ENCODE measurements at regions of chr14 and their contacts with region 1.

Region 1: DNA sequence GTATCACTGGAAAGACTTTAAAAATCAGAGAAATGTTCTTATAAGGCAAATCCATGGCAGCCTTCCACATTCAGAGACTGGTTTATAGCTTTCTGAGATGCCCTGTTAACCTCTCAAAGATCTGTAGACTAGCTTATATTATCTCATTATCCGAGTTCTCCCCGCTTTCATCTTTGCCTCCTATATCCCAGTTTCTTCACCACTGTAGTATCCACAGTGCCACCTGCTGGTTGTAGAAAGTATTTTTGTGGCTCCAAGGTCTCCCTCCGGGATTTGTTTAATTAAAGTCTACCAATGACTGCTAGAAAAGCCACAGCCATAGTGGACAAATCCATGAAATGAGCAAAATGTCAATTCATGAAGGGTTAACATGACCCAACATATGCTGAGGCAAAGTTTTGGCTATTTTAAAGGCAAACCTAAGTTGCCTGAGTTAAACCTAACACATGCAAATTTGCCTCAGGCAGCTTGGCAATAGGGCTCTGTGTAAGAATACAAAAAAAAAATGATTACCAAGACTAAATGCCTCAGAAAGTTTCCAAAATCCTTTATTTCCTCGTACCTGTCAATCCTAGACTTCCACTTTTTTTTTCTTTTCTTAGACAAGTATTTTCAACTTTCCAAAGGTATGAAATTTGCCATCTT is 218.8 kb upstream of the BMP4 start:
- DNase-seq: peak; percentile 84
- H3K4me3 Mint-ChIP-seq: no peak overlapping the region
- H3K27ac Mint-ChIP-seq: no peak overlapping the region
- H3K4me1 Mint-ChIP-seq: peaks cover 30% of the 10 kb centered on the region
- H3K27me3 Mint-ChIP-seq: no peaks in the 10 kb centered on the region
- CTCF ChIP-seq: peak; percentile 80

Region 2: GRCh38 chr14:53432378-53432802 is 743.0 kb before region 1 on chr14:
- CTCF ChIA-PET with region 1: interaction called, 20 read pairs
- POLR2A ChIA-PET with region 1: no interaction called
- intact Hi-C with region 1: loop called (anchors 1 kb)
- DNase-seq: peak; percentile 56
- H3K4me3 Mint-ChIP-seq: no peak overlapping the region
- H3K27ac Mint-ChIP-seq: no peak overlapping the region
- H3K4me1 Mint-ChIP-seq: no peaks in the 10 kb centered on the region
- H3K27me3 Mint-ChIP-seq: no peaks in the 10 kb centered on the region
- CTCF ChIP-seq: peak; percentile 68

Region 3: GRCh38 chr14:53619691-53620231 is 555.7 kb before region 1 on chr14:
- CTCF ChIA-PET with region 1: no interaction called
- POLR2A ChIA-PET with region 1: no interaction called
- intact Hi-C with region 1: no loop called
- DNase-seq: no peak
- H3K4me3 Mint-ChIP-seq: no peak overlapping the region
- H3K27ac Mint-ChIP-seq: no peak overlapping the region
- H3K4me1 Mint-ChIP-seq: peaks cover 6% of the 10 kb centered on the region
- H3K27me3 Mint-ChIP-seq: no peaks in the 10 kb centered on the region
- CTCF ChIP-seq: no peak

Region 4: DNA sequence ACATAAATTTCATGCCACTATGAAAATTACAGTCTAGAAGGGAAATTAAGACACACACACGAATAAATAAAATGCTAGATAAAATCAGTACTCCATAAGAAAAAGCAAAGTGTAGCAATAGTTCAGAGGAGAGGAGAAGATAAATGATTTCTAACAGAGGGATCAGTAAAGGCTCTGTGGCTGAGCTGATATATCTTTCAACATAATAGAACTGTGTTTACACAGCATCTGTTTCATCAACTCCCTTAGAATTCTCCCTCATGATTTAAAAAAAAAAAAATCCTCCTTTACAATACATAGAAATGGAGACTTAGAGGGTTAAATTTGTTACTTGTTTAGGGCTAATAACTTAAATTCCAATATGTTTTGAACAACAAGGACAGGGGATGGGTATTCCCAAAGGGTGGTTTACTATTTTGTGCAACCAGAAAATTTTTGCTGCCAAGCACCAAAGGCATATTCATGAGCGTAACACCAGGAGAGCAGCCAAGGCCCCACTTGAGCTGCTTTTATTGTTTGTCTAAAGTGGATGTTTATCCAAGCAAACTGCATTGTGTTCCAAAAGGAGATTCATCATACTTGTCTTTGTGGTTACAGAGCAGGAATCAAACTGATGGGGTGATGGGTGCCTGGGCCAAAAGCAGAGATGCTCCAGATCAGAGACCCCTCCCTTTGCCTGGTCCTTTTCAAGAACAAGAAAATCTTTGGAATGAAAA is 381.5 kb before region 1 on chr14:
- CTCF ChIA-PET with region 1: no interaction called
- POLR2A ChIA-PET with region 1: no interaction called
- intact Hi-C with region 1: loop called (anchors 10 kb)
- DNase-seq: peak; percentile 50
- H3K4me3 Mint-ChIP-seq: no peak overlapping the region
- H3K27ac Mint-ChIP-seq: no peak overlapping the region
- H3K4me1 Mint-ChIP-seq: no peaks in the 10 kb centered on the region
- H3K27me3 Mint-ChIP-seq: no peaks in the 10 kb centered on the region
- CTCF ChIP-seq: no peak

Region 5: DNA sequence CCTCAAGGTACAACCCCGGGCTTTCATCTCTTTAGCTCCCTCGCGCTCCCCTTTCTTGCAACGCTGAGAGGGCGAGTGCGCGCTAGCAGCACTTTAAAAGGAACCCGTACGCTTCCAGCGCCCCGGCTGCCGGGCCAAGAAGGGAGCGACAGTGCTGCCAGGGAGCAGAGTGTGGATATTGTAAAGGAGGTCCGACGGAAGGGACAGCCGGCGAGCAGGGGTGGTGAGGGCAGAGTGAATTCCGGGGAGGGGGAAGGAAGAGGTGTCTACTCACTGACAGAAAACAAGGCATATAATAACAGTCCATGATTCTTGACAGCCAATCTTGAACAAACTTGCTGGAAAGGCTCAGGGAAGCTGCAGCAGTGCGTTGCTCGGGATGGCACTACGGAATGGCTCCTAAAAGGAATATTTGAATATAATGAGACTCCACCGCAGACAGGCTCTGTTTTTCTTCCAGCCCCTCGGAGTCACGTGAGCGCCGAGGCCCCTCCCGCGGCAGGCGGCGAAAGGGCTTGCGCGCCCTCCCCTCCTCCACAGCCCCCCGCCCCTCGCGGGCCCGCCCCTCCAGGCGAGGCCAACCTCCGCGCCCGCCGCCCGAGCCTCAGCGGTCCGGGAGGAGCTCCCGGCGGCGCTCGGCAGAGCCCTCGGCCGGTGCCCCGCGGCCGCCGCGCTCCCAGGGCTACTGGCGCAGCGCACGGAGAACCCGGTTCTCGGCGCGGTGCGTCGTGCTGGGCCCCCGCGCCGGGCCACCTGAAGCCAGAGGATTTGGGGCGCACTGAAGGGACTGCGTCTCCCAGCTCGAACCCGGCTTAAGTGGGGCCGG is 222.2 kb before region 1 on chr14:
- CTCF ChIA-PET with region 1: interaction called, 4 read pairs
- POLR2A ChIA-PET with region 1: interaction called, 11 read pairs
- intact Hi-C with region 1: loop called (anchors 10 kb)
- DNase-seq: peak; percentile 75
- H3K4me3 Mint-ChIP-seq: peak overlapping the region; percentile 81
- H3K27ac Mint-ChIP-seq: peak overlapping the region; percentile 53
- H3K4me1 Mint-ChIP-seq: peaks cover 8% of the 10 kb centered on the region
- H3K27me3 Mint-ChIP-seq: no peaks in the 10 kb centered on the region
- CTCF ChIP-seq: no peak

Region 6: GRCh38 chr14:54317391-54317790 is 142.0 kb after region 1 on chr14:
- CTCF ChIA-PET with region 1: interaction called, 10 read pairs
- POLR2A ChIA-PET with region 1: no interaction called
- intact Hi-C with region 1: no loop called
- DNase-seq: no peak
- H3K4me3 Mint-ChIP-seq: no peak overlapping the region
- H3K27ac Mint-ChIP-seq: no peak overlapping the region
- H3K4me1 Mint-ChIP-seq: peaks cover 13% of the 10 kb centered on the region
- H3K27me3 Mint-ChIP-seq: no peaks in the 10 kb centered on the region
- CTCF ChIP-seq: no peak

Region 7: GRCh38 chr14:54338696-54339317 is 163.4 kb after region 1 on chr14:
- CTCF ChIA-PET with region 1: interaction called, 21 read pairs
- POLR2A ChIA-PET with region 1: no interaction called
- intact Hi-C with region 1: no loop called
- DNase-seq: peak; percentile 67
- H3K4me3 Mint-ChIP-seq: no peak overlapping the region
- H3K27ac Mint-ChIP-seq: no peak overlapping the region
- H3K4me1 Mint-ChIP-seq: peaks cover 6% of the 10 kb centered on the region
- H3K27me3 Mint-ChIP-seq: no peaks in the 10 kb centered on the region
- CTCF ChIP-seq: peak; percentile 69

Region 8: DNA sequence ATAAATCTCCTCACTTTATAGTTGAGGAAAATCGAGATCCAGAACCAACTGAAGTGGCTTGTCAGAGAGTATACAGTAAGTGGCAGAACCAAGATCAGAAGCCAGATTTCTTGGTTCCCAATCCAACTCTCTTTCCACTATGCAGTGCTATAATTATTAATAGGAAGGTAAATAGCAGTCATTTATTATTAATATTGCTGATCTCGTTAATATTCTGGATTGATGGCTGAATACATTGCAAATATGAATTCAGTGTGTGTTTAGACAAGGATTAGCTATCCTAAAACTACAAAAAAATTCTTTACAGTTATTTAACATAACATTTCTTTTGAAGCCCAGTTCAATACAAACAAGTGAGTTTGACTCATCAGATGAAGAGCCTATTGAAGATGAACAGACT is 224.1 kb after region 1 on chr14:
- CTCF ChIA-PET with region 1: no interaction called
- POLR2A ChIA-PET with region 1: no interaction called
- intact Hi-C with region 1: no loop called
- DNase-seq: no peak
- H3K4me3 Mint-ChIP-seq: no peak overlapping the region
- H3K27ac Mint-ChIP-seq: no peak overlapping the region
- H3K4me1 Mint-ChIP-seq: peaks cover 16% of the 10 kb centered on the region
- H3K27me3 Mint-ChIP-seq: no peaks in the 10 kb centered on the region
- CTCF ChIP-seq: no peak